Activated CD8-positive, alpha-beta T cell treated with anti-CD3 and anti-CD28 coated beads for 36 hours (primary cell): ENCODE measurements at regions of chr2 and their contacts with region 1.

Region 1: DNA sequence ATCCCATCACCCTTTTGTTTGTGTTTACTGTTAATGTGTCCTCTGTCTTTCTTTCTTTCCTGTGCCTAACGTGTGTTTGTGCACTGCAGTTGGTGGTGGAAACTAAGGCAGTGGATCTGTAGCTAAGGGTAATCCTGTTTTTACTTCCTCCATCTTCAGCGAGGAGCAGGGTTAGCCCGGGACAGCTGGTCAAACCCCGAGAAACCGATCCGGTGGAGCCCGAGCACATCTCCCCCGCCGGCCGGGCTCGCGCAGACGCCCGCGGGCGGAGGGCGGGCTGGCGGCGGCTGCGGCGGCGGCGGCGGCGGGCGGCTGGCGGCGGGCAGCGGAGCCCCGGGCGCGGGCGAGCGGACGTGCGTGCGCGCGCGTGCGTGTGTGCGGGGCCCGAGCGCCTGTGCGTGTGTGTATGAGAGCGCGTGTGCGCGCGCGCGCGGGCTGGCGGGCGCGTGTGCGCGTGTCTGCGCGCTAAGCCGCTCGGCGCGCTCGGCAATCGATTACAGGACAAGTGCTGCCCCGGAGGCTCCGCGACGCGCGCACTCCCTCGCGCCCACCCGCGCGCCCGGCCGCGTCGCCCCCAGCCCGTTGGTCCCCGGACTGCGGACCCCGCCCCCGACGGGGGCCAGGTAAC is at the start of gene IKZF2:
- DNase-seq: peak; percentile 79
- ATAC-seq: peak; percentile 77
- H3K4me3 Mint-ChIP-seq: peak within 1 kb of the TSS; percentile 83
- H3K27ac Mint-ChIP-seq: peak within 1 kb of the TSS; percentile 88
- H3K4me1 Mint-ChIP-seq: peaks cover 35% of the 10 kb centered on the region
- H3K27me3 Mint-ChIP-seq: peaks cover 12% of the 10 kb centered on the region
- CTCF ChIP-seq: no peak
- total RNA-seq, gene IKZF2: 24.4 to 28.7 TPM

Region 2: GRCh38 chr2:212686285-212686895 is 465.2 kb before region 1 on chr2:
- CTCF ChIA-PET with region 1: interaction called, 6 read pairs
- POLR2A ChIA-PET with region 1: no interaction called
- intact Hi-C with region 1: loop called (anchors 5 kb)
- DNase-seq: peak; percentile 83
- ATAC-seq: peak; percentile 70
- H3K4me3 Mint-ChIP-seq: no peak overlapping the region
- H3K27ac Mint-ChIP-seq: peak overlapping the region; percentile 39
- H3K4me1 Mint-ChIP-seq: peaks cover 4% of the 10 kb centered on the region
- H3K27me3 Mint-ChIP-seq: no peaks in the 10 kb centered on the region
- CTCF ChIP-seq: peak; percentile 89

Region 3: GRCh38 chr2:212863185-212863588 is 288.4 kb before region 1 on chr2:
- CTCF ChIA-PET with region 1: interaction called, 17 read pairs
- POLR2A ChIA-PET with region 1: interaction called, 6 read pairs
- intact Hi-C with region 1: loop called (anchors 1 kb)
- DNase-seq: peak; percentile 61
- ATAC-seq: peak; percentile 74
- H3K4me3 Mint-ChIP-seq: no peak overlapping the region
- H3K27ac Mint-ChIP-seq: no peak overlapping the region
- H3K4me1 Mint-ChIP-seq: no peaks in the 10 kb centered on the region
- H3K27me3 Mint-ChIP-seq: no peaks in the 10 kb centered on the region
- CTCF ChIP-seq: peak; percentile 81

Region 4: GRCh38 chr2:213015387-213016165 is 136.0 kb before region 1 on chr2:
- CTCF ChIA-PET with region 1: interaction called, 3 read pairs
- POLR2A ChIA-PET with region 1: interaction called, 3 read pairs
- intact Hi-C with region 1: loop called (anchors 5 kb)
- DNase-seq: peak; percentile 87
- ATAC-seq: peak; percentile 83
- H3K4me3 Mint-ChIP-seq: peak overlapping the region; percentile 40
- H3K27ac Mint-ChIP-seq: peak overlapping the region; percentile 72
- H3K4me1 Mint-ChIP-seq: peaks cover 46% of the 10 kb centered on the region
- H3K27me3 Mint-ChIP-seq: peaks cover 9% of the 10 kb centered on the region
- CTCF ChIP-seq: no peak

Region 5: GRCh38 chr2:213129311-213129710 is 22.2 kb before region 1 on chr2:
- CTCF ChIA-PET with region 1: interaction called, 10 read pairs
- POLR2A ChIA-PET with region 1: interaction called, 4 read pairs
- intact Hi-C with region 1: no loop called
- DNase-seq: no peak
- ATAC-seq: no peak
- H3K4me3 Mint-ChIP-seq: no peak overlapping the region
- H3K27ac Mint-ChIP-seq: peak overlapping the region; percentile 27
- H3K4me1 Mint-ChIP-seq: peaks cover 51% of the 10 kb centered on the region
- H3K27me3 Mint-ChIP-seq: no peaks in the 10 kb centered on the region
- CTCF ChIP-seq: no peak

Region 6: DNA sequence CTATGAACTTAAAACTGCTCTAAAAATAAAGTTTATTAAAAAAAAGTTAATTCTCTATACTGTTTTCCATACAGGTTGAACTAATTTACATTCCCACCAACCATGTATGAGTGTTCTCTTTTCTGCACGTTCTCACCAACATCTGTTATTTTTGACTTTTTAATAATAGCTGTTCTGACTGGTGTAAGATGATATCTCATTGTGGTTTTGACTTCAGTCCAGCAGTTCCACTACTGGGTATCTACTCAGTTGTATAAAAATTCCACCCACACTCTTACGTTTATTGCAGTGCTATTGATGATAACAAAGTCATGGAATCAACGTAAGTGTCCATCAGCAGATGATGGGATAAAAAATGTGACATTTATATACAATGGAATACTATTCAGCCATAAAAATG is 166.4 kb after region 1 on chr2:
- CTCF ChIA-PET with region 1: no interaction called
- POLR2A ChIA-PET with region 1: no interaction called
- intact Hi-C with region 1: no loop called
- DNase-seq: no peak
- ATAC-seq: no peak
- H3K4me3 Mint-ChIP-seq: no peak overlapping the region
- H3K27ac Mint-ChIP-seq: no peak overlapping the region
- H3K4me1 Mint-ChIP-seq: no peaks in the 10 kb centered on the region
- H3K27me3 Mint-ChIP-seq: no peaks in the 10 kb centered on the region
- CTCF ChIP-seq: no peak